ENCODE measurements at regions of chr19 and their contacts with region 1.

Region 1: DNA sequence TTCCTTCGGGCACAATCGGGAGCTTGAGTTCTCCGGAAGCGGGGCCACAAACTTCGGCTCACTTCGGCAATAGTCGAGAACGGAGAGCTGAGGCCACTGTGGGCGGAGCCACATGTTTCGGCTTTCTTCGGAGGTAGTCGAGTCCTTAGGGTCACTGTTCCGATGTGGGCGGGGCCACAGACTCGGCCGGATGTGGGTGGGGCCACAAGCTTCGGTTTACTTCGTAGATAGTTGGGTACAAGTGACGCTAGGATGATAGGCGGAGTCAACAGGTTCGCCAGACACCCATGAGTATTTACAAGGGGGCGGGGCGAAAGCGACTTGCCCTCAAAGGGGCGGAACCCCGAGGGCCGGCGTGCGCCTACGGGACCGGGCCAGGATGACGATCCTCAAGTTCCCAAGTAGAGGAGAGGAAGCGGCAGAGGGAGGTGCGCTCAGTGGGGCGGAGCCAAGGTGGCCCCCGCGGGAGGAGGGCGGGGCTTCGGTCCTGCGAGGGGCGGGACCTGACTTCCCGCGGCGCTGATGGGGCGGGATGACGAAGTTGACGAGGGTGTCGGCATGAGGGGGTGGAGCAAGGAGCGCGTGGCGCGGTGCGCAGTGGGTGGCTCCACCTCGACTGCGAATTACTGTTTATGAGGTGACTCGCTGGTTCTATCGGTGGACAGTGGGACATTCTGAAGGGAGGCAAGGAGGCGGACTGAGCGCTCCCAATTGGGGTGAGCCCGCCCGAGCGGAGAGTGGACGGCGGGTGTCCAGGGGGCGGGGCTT is 539 bp upstream of the MBOAT7 start:
- DNase-seq: peak; percentile 100
- ATAC-seq: peak; percentile 74
- H3K4me3 ChIP-seq: peak overlapping the region; percentile 74 to 87
- H3K27ac ChIP-seq: peak overlapping the region; percentile 92
- H3K4me1 ChIP-seq: peaks cover 13% of the 10 kb centered on the region; the same call in 1 of the 2 replicates
- H3K27me3 ChIP-seq: no peaks in the 10 kb centered on the region
- CTCF ChIP-seq: no peak

Region 2: DNA sequence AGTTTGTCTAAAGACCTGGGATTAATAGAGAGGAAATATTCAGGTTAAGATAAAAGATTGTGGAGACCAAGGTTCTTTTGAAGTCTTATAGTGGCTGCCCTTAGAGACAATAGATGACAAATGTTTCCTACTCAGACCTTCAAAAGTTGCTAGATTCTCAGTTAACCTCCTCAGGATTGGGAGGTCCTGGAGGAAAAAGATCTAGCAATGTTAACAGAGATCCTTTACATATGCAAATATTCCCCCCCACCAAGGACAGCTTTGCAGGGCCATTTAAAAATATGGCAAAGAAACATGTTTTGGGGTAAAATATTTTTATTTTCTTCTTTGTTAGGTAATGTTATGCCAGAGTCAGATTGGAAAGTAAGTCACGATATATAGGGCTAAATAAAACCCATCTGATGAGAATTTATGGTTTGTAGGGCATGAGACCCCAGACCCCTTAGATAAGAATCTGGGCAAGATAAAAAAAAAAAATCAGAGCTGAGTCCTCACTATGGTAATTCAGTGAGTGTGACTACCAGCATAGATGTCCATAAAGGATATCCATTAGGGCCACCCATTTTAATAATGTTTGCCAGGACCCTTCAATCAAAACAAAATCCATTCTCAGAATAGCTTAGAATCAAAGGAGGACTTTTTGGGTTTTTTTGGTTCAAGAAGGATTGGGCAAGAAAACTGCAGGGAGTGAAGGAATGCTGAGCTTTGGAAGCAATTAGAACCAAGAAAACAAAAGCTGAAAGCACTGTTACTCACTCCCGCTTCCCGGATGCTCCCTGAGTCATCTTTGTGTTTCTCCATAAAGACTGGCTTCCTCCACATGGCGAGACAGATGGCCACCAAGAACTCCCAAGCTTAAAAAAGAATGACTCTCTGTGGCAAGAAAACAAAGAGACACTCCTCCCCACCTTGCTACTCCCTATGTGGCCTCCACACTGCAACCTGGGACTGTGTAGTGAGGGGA is 154.4 kb before region 1 on chr19:
- CTCF ChIA-PET with region 1: no interaction called
- POLR2A ChIA-PET with region 1: interaction called, 15 read pairs
- in situ Hi-C with region 1: no loop called
- intact Hi-C with region 1: no loop called
- DNase-seq: peak; percentile 57
- ATAC-seq: peak; percentile 72
- H3K4me3 ChIP-seq: no peak overlapping the region
- H3K27ac ChIP-seq: peak overlapping the region; percentile 41
- H3K4me1 ChIP-seq: peaks cover 17% of the 10 kb centered on the region
- H3K27me3 ChIP-seq: no peaks in the 10 kb centered on the region
- CTCF ChIP-seq: no peak

Region 3: DNA sequence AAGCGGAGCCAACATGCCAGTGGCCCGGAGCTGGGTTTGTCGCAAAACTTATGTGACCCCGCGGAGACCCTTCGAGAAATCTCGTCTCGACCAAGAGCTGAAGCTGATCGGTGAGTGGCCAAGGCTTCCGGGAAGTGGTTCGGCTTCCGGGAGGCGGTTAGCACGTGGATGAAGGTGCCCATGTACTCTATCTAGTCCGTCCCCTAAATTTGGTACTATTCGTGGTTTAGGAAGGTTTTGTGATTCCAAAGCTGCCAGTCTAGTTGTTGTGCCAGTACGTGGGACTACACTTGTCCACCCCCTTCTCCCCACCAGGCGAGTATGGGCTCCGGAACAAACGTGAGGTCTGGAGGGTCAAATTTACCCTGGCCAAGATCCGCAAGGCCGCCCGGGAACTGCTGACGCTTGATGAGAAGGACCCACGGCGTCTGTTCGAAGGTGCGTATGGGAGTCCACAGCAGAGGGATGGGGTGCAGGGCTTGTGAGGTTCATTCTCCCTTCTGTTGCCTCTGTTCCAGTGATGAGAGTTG is 11.3 kb after region 1 on chr19:
- CTCF ChIA-PET with region 1: interaction called, 3 read pairs
- POLR2A ChIA-PET with region 1: interaction called, 18 read pairs
- in situ Hi-C with region 1: no loop called
- intact Hi-C with region 1: no loop called
- DNase-seq: no peak
- ATAC-seq: 0 out of 2 replicates have a peak, but pooled peaks have one; percentile 2
- H3K4me3 ChIP-seq: peak overlapping the region; percentile 69 to 96
- H3K27ac ChIP-seq: peak overlapping the region; percentile 95
- H3K4me1 ChIP-seq: peaks cover 45% of the 10 kb centered on the region
- H3K27me3 ChIP-seq: no peaks in the 10 kb centered on the region
- CTCF ChIP-seq: no peak

Region 4: DNA sequence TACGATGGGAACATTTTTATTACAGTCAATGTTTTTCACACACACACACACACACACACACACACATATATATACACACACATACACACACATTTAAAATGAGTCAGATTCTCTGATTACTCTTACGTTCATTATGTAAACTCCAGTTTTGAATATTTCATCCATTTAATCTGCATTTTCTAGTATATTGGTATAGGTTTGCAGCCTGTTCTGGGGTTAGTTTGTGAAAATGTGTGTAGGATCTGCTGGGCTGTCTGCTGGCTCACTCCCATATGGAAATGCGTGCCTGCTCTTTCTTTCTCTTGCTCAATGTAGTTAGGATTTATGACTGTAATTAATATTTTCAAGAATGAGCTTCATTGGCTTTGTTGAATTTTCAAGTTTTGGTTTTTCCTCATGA is 83.9 kb after region 1 on chr19:
- CTCF ChIA-PET with region 1: no interaction called
- POLR2A ChIA-PET with region 1: no interaction called
- in situ Hi-C with region 1: no loop called
- intact Hi-C with region 1: no loop called
- DNase-seq: no peak
- ATAC-seq: no peak
- H3K4me3 ChIP-seq: no peak overlapping the region
- H3K27ac ChIP-seq: no peak overlapping the region
- H3K4me1 ChIP-seq: no peaks in the 10 kb centered on the region
- H3K27me3 ChIP-seq: peaks cover 27% of the 10 kb centered on the region
- CTCF ChIP-seq: no peak

Measured in Panc1 (cell line).